CD4-positive, alpha-beta memory T cell (primary cell): ENCODE measurements at regions of chr4 and their contacts with region 1.

Region 1: GRCh38 chr4:674172-675035 is at the starts of genes ATP5ME and MYL5:
- DNase-seq: peak; percentile 98 to 100 (median 98)
- H3K4me3 ChIP-seq: peak within 1 kb of the TSS; percentile 57 to 76
- H3K4me3 Mint-ChIP-seq: peak within 1 kb of the TSS; percentile 86 to 93 (median 90)
- H3K27ac ChIP-seq: peak within 1 kb of the TSS; percentile 99
- H3K27ac Mint-ChIP-seq: peak within 1 kb of the TSS; percentile 85 to 94 (median 92)
- H3K4me1 ChIP-seq: peaks cover 16% of the 10 kb centered on the region
- H3K4me1 Mint-ChIP-seq: peaks cover 2 to 18% (median 10%) of the 10 kb centered on the region in 4 donors
- H3K27me3 ChIP-seq: no peaks in the 10 kb centered on the region
- H3K27me3 Mint-ChIP-seq: no peaks in the 10 kb centered on the region
- total RNA-seq, gene ATP5ME: 137 to 152 TPM
- total RNA-seq, gene MYL5: 12.1 to 15.4 TPM

Region 2: GRCh38 chr4:498328-498904 is 176.0 kb before region 1 on chr4:
- CTCF ChIA-PET with region 1: no interaction called
- POLR2A ChIA-PET with region 1: interaction called, 4 read pairs
- intact Hi-C with region 1: loop called (anchors 1 kb)
- DNase-seq: no peak
- H3K4me3 ChIP-seq: peak overlapping the region in 1 of 2 donors; percentile 88
- H3K4me3 Mint-ChIP-seq: peak overlapping the region; percentile 92 to 95 (median 93)
- H3K27ac ChIP-seq: peak overlapping the region; percentile 89
- H3K27ac Mint-ChIP-seq: peak overlapping the region; percentile 93 to 97 (median 96)
- H3K4me1 ChIP-seq: peaks cover 22% of the 10 kb centered on the region
- H3K4me1 Mint-ChIP-seq: peaks cover 25 to 65% (median 47%) of the 10 kb centered on the region in 4 donors
- H3K27me3 ChIP-seq: no peaks in the 10 kb centered on the region
- H3K27me3 Mint-ChIP-seq: no peaks in the 10 kb centered on the region

Region 3: GRCh38 chr4:705278-706082 is 31.1 kb after region 1 on chr4 and contains the start of gene PCGF3:
- CTCF ChIA-PET with region 1: no interaction called
- POLR2A ChIA-PET with region 1: interaction called, 4 read pairs
- intact Hi-C with region 1: loop called (anchors 1 kb)
- DNase-seq: peak; percentile 90 to 94 (median 92)
- H3K4me3 ChIP-seq: peak within 1 kb of the TSS; percentile 59 to 69
- H3K4me3 Mint-ChIP-seq: peak within 1 kb of the TSS; percentile 79 to 94 (median 83)
- H3K27ac ChIP-seq: peak within 1 kb of the TSS; percentile 93
- H3K27ac Mint-ChIP-seq: peak within 1 kb of the TSS; percentile 69 to 90 (median 77)
- H3K4me1 ChIP-seq: peaks cover 29% of the 10 kb centered on the region
- H3K4me1 Mint-ChIP-seq: peaks cover 11 to 25% (median 19%) of the 10 kb centered on the region in 4 donors
- H3K27me3 ChIP-seq: no peaks in the 10 kb centered on the region
- H3K27me3 Mint-ChIP-seq: no peaks in the 10 kb centered on the region
- total RNA-seq, gene PCGF3: 66.1 to 73.8 TPM

Region 4: GRCh38 chr4:973431-974397 is 299.3 kb after region 1 on chr4 and contains the start of gene DGKQ:
- CTCF ChIA-PET with region 1: no interaction called
- POLR2A ChIA-PET with region 1: no interaction called
- intact Hi-C with region 1: loop called (anchors 1 kb)
- DNase-seq: peak; percentile 78 to 88 (median 83)
- H3K4me3 ChIP-seq: peak within 1 kb of the TSS; percentile 36 to 57
- H3K4me3 Mint-ChIP-seq: peak within 1 kb of the TSS; percentile 34 to 76 (median 52)
- H3K27ac ChIP-seq: peak within 1 kb of the TSS; percentile 51
- H3K27ac Mint-ChIP-seq: peak within 1 kb of the TSS in 1 of 7 donors; percentile 60
- H3K4me1 ChIP-seq: peaks cover 24% of the 10 kb centered on the region
- H3K4me1 Mint-ChIP-seq: peaks cover 0 to 13% (median 3%) of the 10 kb centered on the region in 4 donors
- H3K27me3 ChIP-seq: no peaks in the 10 kb centered on the region
- H3K27me3 Mint-ChIP-seq: no peaks in the 10 kb centered on the region
- total RNA-seq, gene DGKQ: 25.9 to 29.6 TPM

Region 5: DNA sequence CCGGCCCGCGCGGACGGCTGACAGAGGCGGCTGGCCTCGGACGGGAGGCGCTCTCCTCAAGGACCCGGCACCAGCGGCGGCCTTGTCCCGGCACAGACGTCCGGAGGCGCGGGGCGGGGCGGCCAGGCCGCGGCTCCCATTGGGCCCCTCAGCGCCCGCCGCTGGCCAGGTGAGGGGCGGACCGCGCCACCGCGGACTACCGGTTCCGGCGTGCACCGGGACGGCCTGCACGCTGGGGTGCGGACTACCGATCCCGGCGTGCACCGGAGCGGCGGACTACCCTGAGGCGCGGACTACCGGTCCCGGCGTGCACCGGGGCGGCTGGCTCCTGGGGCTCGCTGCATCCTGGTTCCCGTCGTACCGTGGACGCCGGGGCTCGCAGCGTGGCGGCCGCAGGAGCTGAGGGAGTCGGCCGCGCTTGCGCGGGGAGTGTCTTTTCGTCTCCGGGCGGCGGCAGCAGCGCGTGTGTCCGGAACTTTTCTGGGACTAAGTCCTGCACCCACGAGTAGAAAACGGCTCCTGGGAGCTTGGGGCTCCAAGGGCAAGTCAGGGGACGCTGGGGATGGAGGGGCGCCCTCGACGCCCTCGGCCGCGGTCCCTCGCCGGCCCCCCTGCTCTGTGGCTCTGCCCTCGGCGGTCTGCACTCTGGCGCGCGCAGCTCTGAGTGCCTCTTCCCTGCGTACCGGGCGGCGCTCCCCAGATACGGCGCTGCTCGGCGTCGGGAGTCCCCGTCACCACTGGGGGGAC is 1181.8 kb after region 1 on chr4 and contains the start of gene LETM1:
- CTCF ChIA-PET with region 1: no interaction called
- POLR2A ChIA-PET with region 1: no interaction called
- intact Hi-C with region 1: loop called (anchors 5 kb)
- DNase-seq: peak; percentile 90 to 92 (median 91)
- H3K4me3 ChIP-seq: peak within 1 kb of the TSS; percentile 47 to 89
- H3K4me3 Mint-ChIP-seq: peak within 1 kb of the TSS; percentile 81 to 90 (median 85)
- H3K27ac ChIP-seq: peak within 1 kb of the TSS; percentile 59
- H3K27ac Mint-ChIP-seq: peak within 1 kb of the TSS; percentile 25 to 84 (median 76)
- H3K4me1 ChIP-seq: peaks cover 44% of the 10 kb centered on the region
- H3K4me1 Mint-ChIP-seq: peaks cover 9 to 42% (median 31%) of the 10 kb centered on the region in 4 donors
- H3K27me3 ChIP-seq: no peaks in the 10 kb centered on the region
- H3K27me3 Mint-ChIP-seq: no peaks in the 10 kb centered on the region
- total RNA-seq, gene LETM1: 38.8 to 42.8 TPM